Heart left ventricle (tissue), 16 donors: ENCODE measurements at regions of chr17 and their contacts with region 1.

Region 1: DNA sequence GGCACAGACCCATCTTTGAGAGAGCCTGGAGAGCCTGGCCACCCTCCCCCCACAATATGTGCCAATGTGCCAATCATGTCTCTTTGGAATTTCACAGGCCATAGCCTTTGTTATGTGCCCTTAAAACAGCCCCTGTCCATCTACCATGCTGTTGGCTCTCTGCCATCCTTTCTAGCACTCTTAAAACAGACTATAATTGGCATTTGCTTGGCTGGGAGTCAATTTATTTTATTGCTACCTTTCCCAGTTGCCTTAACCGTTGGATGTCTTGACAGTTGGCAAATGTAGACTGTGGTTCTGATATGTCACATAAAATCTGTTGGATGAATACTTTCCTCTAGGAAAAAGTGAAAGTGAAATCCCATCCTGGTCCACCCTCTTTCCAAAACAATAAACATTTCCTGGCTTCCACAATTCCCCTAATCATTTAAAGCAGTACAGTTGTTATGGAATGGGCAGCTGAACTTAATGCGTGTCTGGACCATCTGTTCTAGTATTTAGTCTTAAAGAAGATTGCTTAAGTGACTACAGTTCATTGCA is 394.0 kb downstream of the KCNJ2 start:
- DNase-seq: peak in 4 of 5 donors; percentile 23 to 69 (median 46)
- ATAC-seq: peak; percentile 55 to 89 (median 84)
- H3K4me3 ChIP-seq: no peak overlapping the region
- H3K27ac ChIP-seq: peak overlapping the region in 1 of 12 donors; percentile 29
- H3K4me1 ChIP-seq: peaks cover 0 to 10% (median 0%) of the 10 kb centered on the region in 12 donors
- H3K27me3 ChIP-seq: no peaks in the 10 kb centered on the region
- CTCF ChIP-seq: no peak
- POLR2A ChIP-seq: no peak

Region 2: DNA sequence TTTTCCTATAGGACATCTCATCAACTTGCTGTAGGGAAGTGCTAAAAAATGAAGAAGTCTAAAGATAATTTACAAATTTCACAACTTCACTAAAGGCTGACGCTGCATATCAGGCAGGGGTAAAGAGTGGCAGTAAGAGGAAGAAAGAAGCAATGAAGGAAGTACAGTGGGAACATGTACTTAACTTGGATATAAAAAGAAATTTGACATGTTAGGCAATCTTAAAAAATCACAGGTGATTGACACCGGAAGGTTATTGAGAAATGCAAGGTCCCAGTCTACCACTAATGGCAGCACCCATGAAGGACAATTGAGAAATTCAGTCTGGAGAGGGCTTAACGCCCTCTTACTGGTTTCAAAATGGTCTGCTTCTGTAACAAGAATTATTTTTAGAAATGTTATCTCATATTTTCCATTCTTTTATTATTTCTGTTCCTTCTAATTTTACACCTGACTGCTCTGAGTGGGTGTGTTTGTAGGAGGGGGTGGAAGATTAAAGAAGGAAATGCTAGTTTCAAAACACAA is 35.9 kb before region 1 on chr17:
- intact Hi-C with region 1: loop called in 1 of 10 experiments (anchors 1 kb)
- DNase-seq: no peak
- ATAC-seq: peak; percentile 78 to 96 (median 88)
- H3K4me3 ChIP-seq: no peak overlapping the region
- H3K27ac ChIP-seq: peak overlapping the region in 9 of 12 donors; percentile 16 to 78 (median 57)
- H3K4me1 ChIP-seq: peaks cover 0 to 23% (median 6%) of the 10 kb centered on the region in 12 donors
- H3K27me3 ChIP-seq: no peaks in the 10 kb centered on the region
- CTCF ChIP-seq: peak in 1 of 12 donors; percentile 3
- POLR2A ChIP-seq: no peak

Region 3: DNA sequence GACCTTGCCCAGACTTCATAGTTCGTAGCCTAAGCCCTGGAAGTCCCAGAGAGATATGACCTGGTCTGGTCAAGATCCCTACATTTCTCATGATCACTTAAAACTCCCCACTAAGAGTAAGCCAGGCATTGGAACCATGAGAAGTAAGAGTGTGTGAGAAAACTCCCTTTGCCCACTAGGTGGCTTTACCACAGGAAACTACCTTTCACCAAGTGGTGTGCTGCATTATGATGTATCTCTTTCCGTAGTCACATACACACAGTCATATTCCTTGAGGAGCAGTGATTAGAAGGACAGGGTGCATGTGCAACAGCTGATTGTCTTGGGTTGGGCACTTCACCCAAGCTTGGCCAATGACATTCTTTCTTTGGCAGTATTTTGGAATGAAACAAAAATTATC is 245.2 kb after region 1 on chr17:
- intact Hi-C with region 1: no loop called
- DNase-seq: no peak
- ATAC-seq: no peak
- H3K4me3 ChIP-seq: no peak overlapping the region
- H3K27ac ChIP-seq: no peak overlapping the region
- H3K4me1 ChIP-seq: no peaks in the 10 kb centered on the region
- H3K27me3 ChIP-seq: no peaks in the 10 kb centered on the region
- CTCF ChIP-seq: no peak
- POLR2A ChIP-seq: no peak